ENCODE measurements at regions of chr16 and their contacts with region 1.

Region 1: DNA sequence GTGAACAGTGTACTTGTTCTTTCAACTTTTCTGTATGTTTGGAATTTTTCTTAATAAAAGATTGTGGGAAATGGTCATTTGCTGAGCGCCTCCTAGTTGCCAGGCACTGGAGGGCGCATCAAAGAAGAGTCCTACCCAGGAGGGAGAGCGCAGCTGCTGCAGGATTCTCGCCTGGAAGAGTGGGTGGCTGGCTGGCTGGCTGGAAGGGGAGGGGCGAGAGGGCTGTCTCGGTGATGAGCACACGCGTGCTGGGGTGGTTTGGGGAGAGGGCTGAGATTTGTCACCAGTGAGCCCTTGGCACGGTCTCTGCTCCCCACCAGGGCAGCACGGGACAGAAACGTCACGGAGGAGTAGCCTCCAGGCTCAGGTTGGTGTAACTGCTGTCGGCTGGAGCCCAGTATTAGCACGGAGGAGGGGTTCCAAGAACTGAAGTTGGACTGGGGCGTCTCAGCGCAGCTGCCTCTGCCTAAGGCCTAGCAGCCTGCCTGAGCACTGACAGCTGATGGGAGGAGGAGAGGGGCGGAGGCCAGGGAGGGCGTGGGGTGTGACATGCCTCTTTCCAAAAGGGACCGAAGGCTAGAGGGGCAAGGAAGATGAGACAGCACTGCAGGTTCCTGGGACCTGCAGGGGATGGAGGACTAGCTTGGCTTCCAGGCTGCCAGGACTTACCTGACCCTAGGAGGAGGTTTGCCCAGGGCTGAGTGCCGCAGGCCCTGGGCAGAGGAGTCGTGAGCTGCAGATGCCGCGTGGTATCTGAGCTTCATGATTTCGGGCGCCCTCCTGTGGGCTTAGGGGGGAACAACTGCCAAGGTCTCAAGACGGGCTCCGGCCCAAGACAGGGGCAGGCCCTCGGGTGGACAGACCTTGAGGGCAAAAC is 5.7 kb downstream of the LDHD start:
- DNase-seq: peak; percentile 86 to 91
- ATAC-seq: peak; percentile 66

Region 2: GRCh38 chr16:74998481-74999218 is 112.2 kb before region 1 on chr16 and contains the start of gene ZNRF1:
- intact Hi-C with region 1: loop called in 1 of 2 experiments (anchors 2 kb)
- DNase-seq: peak; percentile 74 to 88
- ATAC-seq: peak; percentile 84
- total RNA-seq, gene ZNRF1: 36.4 to 38.2 TPM